CD8-positive, alpha-beta T cell (primary cell): ENCODE measurements at regions of chr1 and their contacts with region 1.

Region 1: DNA sequence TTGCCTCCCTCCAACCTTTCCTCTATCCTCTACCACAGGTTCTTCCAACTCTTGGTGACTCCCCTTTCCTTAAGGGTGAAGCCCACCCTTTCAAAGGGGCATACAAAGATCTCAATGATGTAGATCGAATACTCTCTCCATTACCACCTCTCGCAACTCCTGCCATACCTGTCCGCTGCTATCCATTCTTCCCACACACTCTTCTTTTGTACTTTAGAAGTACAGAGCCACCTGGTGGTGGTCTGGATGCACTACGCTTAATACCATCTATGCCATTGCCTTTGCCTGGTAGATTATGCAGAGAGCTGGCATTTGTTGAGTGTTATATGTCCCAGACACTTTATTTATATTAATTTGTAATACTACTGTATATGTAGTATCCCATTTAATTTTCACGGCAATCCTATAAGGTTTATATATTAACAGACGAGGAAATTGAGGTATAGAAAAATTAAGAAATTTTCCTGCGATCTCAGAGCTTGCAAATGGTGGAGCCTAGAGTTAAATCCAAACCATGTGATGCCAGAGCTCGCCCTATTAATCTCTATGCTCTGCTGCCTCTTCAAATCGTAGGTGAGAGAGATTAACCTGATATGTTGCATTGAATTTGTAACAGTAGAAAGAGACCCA is 22.9 kb downstream of the TSHB start:
- DNase-seq: peak; percentile 22 to 75 (median 62)
- ATAC-seq: peak; percentile 98
- H3K4me3 ChIP-seq: no peak overlapping the region
- H3K4me3 Mint-ChIP-seq: no peak overlapping the region
- H3K27ac ChIP-seq: no peak overlapping the region
- H3K27ac Mint-ChIP-seq: no peak overlapping the region
- H3K4me1 ChIP-seq: no peaks in the 10 kb centered on the region
- H3K4me1 Mint-ChIP-seq: no peaks in the 10 kb centered on the region
- H3K27me3 ChIP-seq: no peaks in the 10 kb centered on the region
- H3K27me3 Mint-ChIP-seq: no peaks in the 10 kb centered on the region
- CTCF ChIP-seq: peak; percentile 99

Region 2: GRCh38 chr1:114670083-114671010 is 382.2 kb before region 1 on chr1:
- CTCF ChIA-PET with region 1: no interaction called
- POLR2A ChIA-PET with region 1: no interaction called
- intact Hi-C with region 1: loop called in 1 of 2 experiments (anchors 10 kb)
- DNase-seq: peak in 8 of 9 experiments; percentile 2 to 90 (median 86)
- ATAC-seq: peak; percentile 96
- H3K4me3 ChIP-seq: peak overlapping the region; percentile 77 to 79
- H3K4me3 Mint-ChIP-seq: peak overlapping the region; percentile 98
- H3K27ac ChIP-seq: peak overlapping the region in 1 of 2 experiments; percentile 49
- H3K27ac Mint-ChIP-seq: peak overlapping the region; percentile 92
- H3K4me1 ChIP-seq: peaks cover 5% of the 10 kb centered on the region
- H3K4me1 Mint-ChIP-seq: peaks cover 14% of the 10 kb centered on the region
- H3K27me3 ChIP-seq: no peaks in the 10 kb centered on the region
- H3K27me3 Mint-ChIP-seq: peaks cover 11% of the 10 kb centered on the region
- CTCF ChIP-seq: no peak

Region 3: GRCh38 chr1:115040501-115040900 is 12.1 kb before region 1 on chr1:
- CTCF ChIA-PET with region 1: interaction called, 15 read pairs
- POLR2A ChIA-PET with region 1: interaction called, 3 read pairs
- intact Hi-C with region 1: no loop called
- DNase-seq: no peak
- ATAC-seq: no peak
- H3K4me3 ChIP-seq: no peak overlapping the region
- H3K4me3 Mint-ChIP-seq: no peak overlapping the region
- H3K27ac ChIP-seq: no peak overlapping the region
- H3K27ac Mint-ChIP-seq: no peak overlapping the region
- H3K4me1 ChIP-seq: no peaks in the 10 kb centered on the region
- H3K4me1 Mint-ChIP-seq: no peaks in the 10 kb centered on the region
- H3K27me3 ChIP-seq: no peaks in the 10 kb centered on the region
- H3K27me3 Mint-ChIP-seq: no peaks in the 10 kb centered on the region
- CTCF ChIP-seq: no peak

Region 4: GRCh38 chr1:115073298-115074087 is 20.9 kb after region 1 on chr1:
- CTCF ChIA-PET with region 1: interaction called, 13 read pairs
- POLR2A ChIA-PET with region 1: no interaction called
- intact Hi-C with region 1: no loop called
- DNase-seq: peak in 2 of 9 experiments; percentile 29 to 45
- ATAC-seq: peak; percentile 38
- H3K4me3 ChIP-seq: no peak overlapping the region
- H3K4me3 Mint-ChIP-seq: no peak overlapping the region
- H3K27ac ChIP-seq: no peak overlapping the region
- H3K27ac Mint-ChIP-seq: no peak overlapping the region
- H3K4me1 ChIP-seq: peaks cover 10% of the 10 kb centered on the region
- H3K4me1 Mint-ChIP-seq: peaks cover 31% of the 10 kb centered on the region
- H3K27me3 ChIP-seq: no peaks in the 10 kb centered on the region
- H3K27me3 Mint-ChIP-seq: peaks cover 2% of the 10 kb centered on the region
- CTCF ChIP-seq: no peak

Region 5: DNA sequence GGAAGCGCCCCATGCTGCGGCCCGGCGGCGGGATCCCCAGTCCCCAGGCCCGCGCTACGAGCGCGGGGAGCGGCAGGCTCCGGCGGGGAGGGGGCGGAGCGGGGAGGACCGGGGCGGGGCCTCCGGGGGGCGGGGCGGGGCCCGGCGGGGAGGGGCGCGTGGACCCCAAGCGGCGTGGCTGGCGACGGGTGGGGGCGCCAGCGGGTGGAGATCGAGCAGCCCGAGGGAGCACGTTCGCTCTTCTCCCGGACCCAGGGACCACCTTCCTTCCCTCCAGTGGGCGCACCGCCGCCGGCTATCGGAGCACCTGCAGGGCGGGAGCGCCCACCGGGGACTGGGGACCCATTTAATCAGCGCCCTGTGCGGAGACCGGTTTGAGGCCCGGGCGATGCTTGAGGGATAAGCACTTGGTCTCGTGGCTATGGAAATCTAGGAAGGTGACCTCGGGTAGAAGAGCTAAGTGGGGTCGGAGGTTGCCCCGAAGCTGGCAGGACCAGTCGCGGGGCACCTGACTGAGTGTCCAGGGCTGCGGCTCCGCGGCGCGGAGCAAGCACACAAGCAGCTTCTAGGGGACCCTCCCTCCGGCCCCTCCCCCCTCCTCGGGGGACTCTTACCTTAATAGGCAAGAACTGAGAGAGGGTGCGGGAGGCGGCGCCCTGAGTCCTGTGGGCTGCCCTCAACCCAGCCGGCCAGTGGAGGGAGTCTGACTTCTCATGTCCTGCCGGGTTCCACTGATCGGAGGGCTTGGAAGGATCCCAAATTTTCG is 37.0 kb after region 1 on chr1 and contains the start of gene TSPAN2:
- CTCF ChIA-PET with region 1: interaction called, 17 read pairs
- POLR2A ChIA-PET with region 1: no interaction called
- intact Hi-C with region 1: loop called in 1 of 2 experiments (anchors 5 kb)
- DNase-seq: peak; percentile 34 to 77 (median 59)
- ATAC-seq: peak; percentile 89
- H3K4me3 ChIP-seq: peak within 1 kb of the TSS; percentile 67 to 82
- H3K4me3 Mint-ChIP-seq: peak within 1 kb of the TSS; percentile 84
- H3K27ac ChIP-seq: peak within 1 kb of the TSS; percentile 7 to 54
- H3K27ac Mint-ChIP-seq: peak within 1 kb of the TSS; percentile 78
- H3K4me1 ChIP-seq: peaks cover 16% of the 10 kb centered on the region
- H3K4me1 Mint-ChIP-seq: peaks cover 41% of the 10 kb centered on the region
- H3K27me3 ChIP-seq: no peaks in the 10 kb centered on the region
- H3K27me3 Mint-ChIP-seq: no peaks in the 10 kb centered on the region
- CTCF ChIP-seq: no peak
- total RNA-seq, gene TSPAN2: 0.43 to 0.72 TPM

Region 6: DNA sequence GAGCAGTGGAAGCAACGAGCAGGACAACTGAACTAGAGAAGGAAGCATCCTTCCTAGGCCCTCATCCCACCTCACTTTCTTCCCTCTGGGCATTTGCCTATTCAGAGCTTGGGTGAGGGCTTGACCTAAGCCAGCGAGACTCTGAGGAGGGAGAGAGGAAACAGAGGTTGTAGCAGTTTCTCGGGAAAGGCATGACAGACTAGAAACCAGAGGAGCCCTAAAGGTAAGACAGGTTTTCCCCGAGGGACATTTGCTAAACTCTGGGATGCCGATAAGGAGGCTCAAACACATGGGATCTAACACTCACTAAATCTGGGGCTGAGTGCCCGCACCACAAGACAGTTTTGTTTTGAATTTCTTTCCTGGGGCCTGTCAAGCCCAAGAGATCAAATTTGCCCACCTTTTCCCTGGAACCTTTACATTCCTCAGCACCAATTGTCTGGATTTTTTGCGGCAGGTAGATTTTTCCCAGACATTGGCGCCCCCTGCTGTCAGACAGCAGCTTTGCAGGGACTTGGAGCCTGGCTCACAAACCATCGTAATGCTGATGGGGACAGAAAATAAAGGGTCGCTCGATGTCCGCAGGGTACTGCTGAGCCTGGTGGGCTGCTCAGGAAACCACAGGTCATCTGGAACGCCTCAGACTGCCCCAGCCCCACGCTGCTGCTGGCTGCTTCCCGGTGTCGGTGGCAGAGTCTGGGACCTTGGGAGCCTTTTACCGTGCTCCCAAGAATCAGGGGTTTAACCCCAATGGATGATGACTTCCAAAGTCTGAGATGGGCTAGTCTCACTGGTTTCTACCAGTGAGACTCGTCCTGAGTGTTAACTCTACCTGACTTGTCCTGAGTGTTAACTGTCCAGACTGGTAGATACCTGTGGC is 60.2 kb after region 1 on chr1:
- CTCF ChIA-PET with region 1: interaction called, 35 read pairs
- POLR2A ChIA-PET with region 1: no interaction called
- intact Hi-C with region 1: loop called (anchors 2 kb)
- DNase-seq: peak; percentile 26 to 79 (median 60)
- ATAC-seq: peak; percentile 64
- H3K4me3 ChIP-seq: no peak overlapping the region
- H3K4me3 Mint-ChIP-seq: no peak overlapping the region
- H3K27ac ChIP-seq: no peak overlapping the region
- H3K27ac Mint-ChIP-seq: no peak overlapping the region
- H3K4me1 ChIP-seq: no peaks in the 10 kb centered on the region
- H3K4me1 Mint-ChIP-seq: peaks cover 15% of the 10 kb centered on the region
- H3K27me3 ChIP-seq: no peaks in the 10 kb centered on the region
- H3K27me3 Mint-ChIP-seq: peaks cover 4% of the 10 kb centered on the region
- CTCF ChIP-seq: peak; percentile 99